ENCODE measurements at regions of chr12 and their contacts with region 1.

Region 1: GRCh38 chr12:51083126-51083833 is at the start of gene CSRNP2:
- DNase-seq: peak; percentile 95
- H3K4me3 ChIP-seq: peak within 1 kb of the TSS; percentile 90
- H3K27ac ChIP-seq: no peak within 1 kb of the TSS
- H3K4me1 ChIP-seq: peaks cover 23% of the 10 kb centered on the region
- CTCF ChIP-seq: 0 out of 2 replicates have a peak, but pooled peaks have one; percentile 24
- total RNA-seq, gene CSRNP2: 10.4 and 11.7 TPM in 2 replicates

Region 2: DNA sequence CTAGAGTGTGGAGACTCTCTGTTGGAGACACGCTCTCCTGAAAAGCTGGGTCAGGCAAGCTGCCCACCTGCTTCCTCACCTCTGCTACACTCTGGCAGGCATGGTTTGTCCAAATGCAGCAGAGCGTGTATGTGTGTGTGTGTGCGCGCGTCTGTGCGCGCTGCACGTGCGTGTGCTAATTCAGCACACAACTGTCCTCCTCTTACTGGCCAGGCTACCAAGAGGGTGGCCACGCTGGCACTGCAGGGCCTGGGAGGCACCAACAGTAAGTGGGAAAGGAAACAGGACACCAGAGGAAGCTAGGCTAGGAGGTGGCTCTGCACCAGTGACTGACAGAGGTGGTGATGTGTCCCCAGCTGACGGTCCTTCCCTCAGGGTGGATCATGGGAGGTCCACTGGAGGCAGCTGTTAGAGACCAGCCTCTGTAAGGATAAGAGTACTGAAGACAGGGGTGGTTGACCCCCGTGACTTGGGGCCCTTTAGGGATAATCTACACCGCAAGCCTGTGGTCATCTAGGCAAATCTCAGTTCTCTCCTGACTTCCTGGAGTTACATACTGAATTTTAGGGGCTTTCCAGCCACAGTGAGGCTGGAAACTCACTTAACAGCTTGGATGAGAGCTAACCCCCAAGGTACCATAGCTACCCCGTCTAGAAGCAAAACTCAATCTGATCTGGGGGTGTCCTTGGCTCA is 105.2 kb after region 1 on chr12:
- CTCF ChIA-PET with region 1: no interaction called
- POLR2A ChIA-PET with region 1: interaction called, 5 read pairs
- intact Hi-C with region 1: loop called (anchors 5 kb)
- DNase-seq: peak; percentile 76
- H3K4me3 ChIP-seq: peak overlapping the region; percentile 57
- H3K27ac ChIP-seq: peak overlapping the region; percentile 67
- H3K4me1 ChIP-seq: peaks cover 52% of the 10 kb centered on the region
- CTCF ChIP-seq: no peak

Region 3: DNA sequence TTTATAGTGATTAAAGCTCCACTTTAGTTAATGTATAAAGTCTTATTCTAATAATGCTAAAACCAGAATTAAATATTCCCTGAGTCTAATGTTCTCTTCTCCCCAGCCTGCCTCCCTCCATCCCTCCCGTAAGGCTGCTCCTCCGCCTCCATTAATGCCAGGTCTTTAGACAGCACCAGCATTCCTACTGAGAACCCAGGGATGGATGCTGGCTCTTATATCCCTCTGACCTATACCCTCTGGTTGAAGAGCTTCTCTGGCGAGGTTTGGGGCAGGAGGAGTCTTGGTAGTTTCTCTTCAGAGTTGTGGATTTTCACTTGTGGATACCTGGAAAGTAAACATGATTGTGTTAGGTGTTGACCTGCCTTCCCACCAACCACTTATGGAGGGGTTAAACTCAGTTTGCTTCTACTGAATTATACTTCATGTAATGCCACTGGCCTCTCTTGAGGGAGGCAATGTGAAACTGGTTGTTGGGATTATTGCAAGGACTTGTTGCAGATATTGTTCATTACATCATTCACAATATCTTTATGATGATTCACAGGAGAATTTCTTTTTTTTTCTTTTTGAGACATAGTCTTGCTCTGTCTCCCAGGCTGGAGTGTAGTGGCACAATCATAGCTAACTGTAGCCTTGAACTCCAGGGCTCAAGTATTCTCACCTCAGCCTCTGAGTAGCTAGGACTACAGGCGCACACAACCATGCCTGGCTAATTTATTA is 198.1 kb after region 1 on chr12:
- CTCF ChIA-PET with region 1: no interaction called
- POLR2A ChIA-PET with region 1: no interaction called
- intact Hi-C with region 1: no loop called
- DNase-seq: no peak
- H3K4me3 ChIP-seq: no peak overlapping the region
- H3K27ac ChIP-seq: no peak overlapping the region
- H3K4me1 ChIP-seq: peaks cover 9% of the 10 kb centered on the region
- CTCF ChIP-seq: no peak

Region 4: DNA sequence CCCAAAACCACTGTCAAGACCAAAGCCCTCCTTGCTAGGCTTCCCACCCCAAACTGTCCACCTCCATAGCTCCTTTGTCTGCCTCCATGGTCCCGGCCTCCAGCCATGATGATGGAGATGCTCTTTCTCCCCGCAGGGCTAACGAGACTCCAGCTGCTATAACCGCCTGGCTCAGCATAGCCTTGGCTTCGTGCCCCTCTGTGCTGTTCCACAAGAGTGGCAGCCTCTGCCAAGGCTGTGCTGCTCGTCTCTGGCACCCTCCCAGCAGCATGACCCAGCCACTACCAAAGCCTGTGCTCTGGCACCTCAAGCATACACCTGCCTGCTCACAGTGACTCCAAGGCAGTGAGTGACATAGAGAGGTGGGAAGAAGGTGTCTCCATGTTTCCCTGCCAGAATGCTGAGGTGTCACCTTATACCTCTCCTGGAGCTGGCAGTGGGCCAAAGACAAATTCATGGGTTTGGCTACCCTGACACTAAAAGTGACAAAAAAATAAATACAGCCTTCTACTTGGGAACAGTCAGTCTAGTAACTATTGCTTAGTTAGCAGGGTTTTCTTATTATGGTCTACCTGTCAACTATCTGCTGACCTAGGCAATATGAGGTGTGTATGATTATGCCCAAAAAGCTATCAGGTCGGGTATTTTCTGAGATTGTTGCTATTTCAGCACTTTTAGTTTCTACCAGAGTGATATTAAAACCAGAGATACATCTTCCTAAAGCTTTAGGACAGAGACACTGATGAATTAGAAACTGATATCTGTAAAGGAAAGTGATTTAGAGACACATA is 1551.2 kb after region 1 on chr12:
- CTCF ChIA-PET with region 1: no interaction called
- POLR2A ChIA-PET with region 1: no interaction called
- intact Hi-C with region 1: no loop called
- DNase-seq: no peak
- H3K4me3 ChIP-seq: no peak overlapping the region
- H3K27ac ChIP-seq: no peak overlapping the region
- H3K4me1 ChIP-seq: no peaks in the 10 kb centered on the region
- CTCF ChIP-seq: no peak